CD14-positive monocyte (primary cell): ENCODE measurements at regions of chr22 and their contacts with region 1.

Region 1: DNA sequence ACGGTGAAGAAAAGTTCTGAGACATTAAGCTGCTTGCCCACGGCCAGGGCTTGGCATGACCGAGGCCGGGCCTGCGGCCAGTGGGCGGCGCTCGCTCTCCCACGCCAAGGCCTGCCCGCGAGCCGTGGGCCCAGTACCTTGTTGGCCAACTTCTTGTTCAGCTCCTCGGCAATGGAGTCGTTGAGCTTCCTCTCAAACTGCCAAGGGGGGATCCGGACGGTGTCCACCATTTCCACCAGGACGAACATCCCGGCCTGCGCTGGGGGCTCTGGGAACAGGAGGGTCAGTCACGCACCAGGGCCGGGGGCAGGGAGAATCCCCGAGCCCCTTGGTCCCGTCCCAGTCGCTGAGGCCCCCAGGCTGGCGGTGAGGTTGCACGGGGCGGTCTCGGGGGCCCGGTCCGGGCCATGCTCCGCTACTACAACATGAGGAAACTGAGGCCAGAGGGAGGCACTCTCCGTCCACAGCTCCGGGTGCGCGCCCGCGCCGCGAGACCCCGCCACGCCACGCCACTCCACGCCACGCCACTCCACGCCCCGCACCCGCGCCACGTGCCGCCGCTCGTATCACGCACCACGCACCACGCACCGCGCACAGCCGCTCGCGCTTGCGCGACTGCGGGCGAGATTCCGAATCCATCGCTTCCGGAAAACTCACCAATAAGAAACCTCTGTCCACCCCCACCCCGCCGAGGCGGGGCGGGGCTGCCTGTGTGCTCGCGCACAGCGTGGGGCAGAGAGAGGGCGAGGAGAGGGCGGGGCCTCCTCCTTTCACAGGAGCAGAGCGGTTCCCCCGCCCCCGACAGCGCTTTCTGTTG is at the start of gene POLR3H:
- DNase-seq: peak; percentile 96 to 99 (median 98)
- H3K4me3 ChIP-seq: peak within 1 kb of the TSS; percentile 56 to 93 (median 82)
- H3K4me3 Mint-ChIP-seq: peak within 1 kb of the TSS; percentile 87 to 94
- H3K27ac ChIP-seq: peak within 1 kb of the TSS; percentile 87 to 93
- H3K27ac Mint-ChIP-seq: peak within 1 kb of the TSS; percentile 83 to 95 (median 93)
- H3K4me1 ChIP-seq: peaks cover 17 to 24% of the 10 kb centered on the region in 2 donors
- H3K4me1 Mint-ChIP-seq: peaks cover 29% of the 10 kb centered on the region
- H3K27me3 ChIP-seq: no peaks in the 10 kb centered on the region
- H3K27me3 Mint-ChIP-seq: peaks cover 0 to 4% (median 2%) of the 10 kb centered on the region in 3 donors
- CTCF ChIP-seq: peak; percentile 79
- polyA plus RNA-seq, gene POLR3H: 9.4 to 19.0 (median 10.4) TPM

Region 2: GRCh38 chr22:41526837-41527799 is 16.9 kb before region 1 on chr22:
- intact Hi-C with region 1: no loop called
- DNase-seq: peak; percentile 20 to 36 (median 20)
- H3K4me3 ChIP-seq: no peak overlapping the region
- H3K4me3 Mint-ChIP-seq: no peak overlapping the region
- H3K27ac ChIP-seq: peak overlapping the region; percentile 16 to 61
- H3K27ac Mint-ChIP-seq: peak overlapping the region in 3 of 7 donors; percentile 64 to 77 (median 70)
- H3K4me1 ChIP-seq: peaks cover 0 to 9% of the 10 kb centered on the region in 2 donors
- H3K4me1 Mint-ChIP-seq: peaks cover 8% of the 10 kb centered on the region
- H3K27me3 ChIP-seq: no peaks in the 10 kb centered on the region
- H3K27me3 Mint-ChIP-seq: peaks cover 0 to 6% (median 0%) of the 10 kb centered on the region in 3 donors
- CTCF ChIP-seq: peak; percentile 98

Region 3: DNA sequence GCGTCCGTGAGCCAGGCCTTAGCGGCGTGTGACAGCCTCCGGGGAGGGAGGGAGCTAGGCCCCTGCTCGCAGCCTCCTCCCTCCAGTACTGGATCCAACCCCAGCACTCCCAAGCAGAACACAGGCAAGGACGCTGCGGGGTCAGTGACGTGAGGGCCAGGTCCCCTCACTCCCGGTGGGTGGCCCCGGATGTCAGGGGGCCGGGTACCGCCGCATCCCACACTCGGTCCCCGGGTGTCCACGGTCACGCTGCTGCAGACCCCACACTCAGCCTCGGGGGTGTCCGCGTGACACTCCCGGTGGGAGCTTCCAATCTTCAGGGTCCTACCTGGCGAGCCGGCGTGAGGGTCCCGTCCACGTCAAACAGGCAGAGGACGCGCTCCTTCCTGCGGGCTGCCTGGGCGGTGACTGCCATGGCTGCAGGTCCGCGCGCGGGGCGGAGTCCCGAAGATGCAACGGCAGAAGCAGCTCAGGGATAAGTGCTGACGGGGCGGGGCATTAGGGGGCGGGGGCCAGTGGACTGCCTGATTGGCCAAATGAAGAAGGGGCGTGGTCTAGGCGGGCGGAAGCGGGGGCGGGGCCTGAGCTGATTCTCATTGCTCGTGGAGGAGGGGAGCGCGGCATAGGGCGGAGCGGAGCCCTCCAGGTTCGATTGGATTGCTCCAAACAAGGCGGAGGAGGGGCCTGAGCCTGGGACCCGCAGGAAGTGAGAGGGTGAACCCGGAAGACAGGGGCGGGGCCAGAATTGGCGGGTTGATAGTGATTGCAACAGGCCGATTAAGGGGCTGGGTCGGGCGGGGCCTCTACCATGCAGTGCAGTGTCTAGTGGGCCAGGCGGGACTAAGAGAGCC is 45.6 kb after region 1 on chr22 and contains the start of gene PMM1:
- intact Hi-C with region 1: loop called in 1 of 2 experiments (anchors 5 kb)
- DNase-seq: peak; percentile 100
- H3K4me3 ChIP-seq: peak within 1 kb of the TSS; percentile 69 to 94 (median 71)
- H3K4me3 Mint-ChIP-seq: peak within 1 kb of the TSS; percentile 88 to 93
- H3K27ac ChIP-seq: peak within 1 kb of the TSS in 1 of 2 donors; percentile 82
- H3K27ac Mint-ChIP-seq: peak within 1 kb of the TSS; percentile 60 to 90 (median 80)
- H3K4me1 ChIP-seq: peaks cover 17 to 19% of the 10 kb centered on the region in 2 donors
- H3K4me1 Mint-ChIP-seq: peaks cover 12% of the 10 kb centered on the region
- H3K27me3 ChIP-seq: no peaks in the 10 kb centered on the region
- H3K27me3 Mint-ChIP-seq: peaks cover 1 to 4% (median 2%) of the 10 kb centered on the region in 3 donors
- CTCF ChIP-seq: no peak
- polyA plus RNA-seq, gene PMM1: 15.6 to 32.4 (median 23.5) TPM

Region 4: GRCh38 chr22:41596776-41597634 is 52.9 kb after region 1 on chr22:
- intact Hi-C with region 1: loop called (anchors 5 kb)
- DNase-seq: peak; percentile 24 to 48 (median 40)
- H3K4me3 ChIP-seq: no peak overlapping the region
- H3K4me3 Mint-ChIP-seq: no peak overlapping the region
- H3K27ac ChIP-seq: no peak overlapping the region
- H3K27ac Mint-ChIP-seq: peak overlapping the region in 4 of 7 donors; percentile 31 to 68 (median 50)
- H3K4me1 ChIP-seq: no peaks in the 10 kb centered on the region
- H3K4me1 Mint-ChIP-seq: no peaks in the 10 kb centered on the region
- H3K27me3 ChIP-seq: no peaks in the 10 kb centered on the region
- H3K27me3 Mint-ChIP-seq: peaks cover 5 to 9% (median 5%) of the 10 kb centered on the region in 3 donors
- CTCF ChIP-seq: peak; percentile 80

Region 5: DNA sequence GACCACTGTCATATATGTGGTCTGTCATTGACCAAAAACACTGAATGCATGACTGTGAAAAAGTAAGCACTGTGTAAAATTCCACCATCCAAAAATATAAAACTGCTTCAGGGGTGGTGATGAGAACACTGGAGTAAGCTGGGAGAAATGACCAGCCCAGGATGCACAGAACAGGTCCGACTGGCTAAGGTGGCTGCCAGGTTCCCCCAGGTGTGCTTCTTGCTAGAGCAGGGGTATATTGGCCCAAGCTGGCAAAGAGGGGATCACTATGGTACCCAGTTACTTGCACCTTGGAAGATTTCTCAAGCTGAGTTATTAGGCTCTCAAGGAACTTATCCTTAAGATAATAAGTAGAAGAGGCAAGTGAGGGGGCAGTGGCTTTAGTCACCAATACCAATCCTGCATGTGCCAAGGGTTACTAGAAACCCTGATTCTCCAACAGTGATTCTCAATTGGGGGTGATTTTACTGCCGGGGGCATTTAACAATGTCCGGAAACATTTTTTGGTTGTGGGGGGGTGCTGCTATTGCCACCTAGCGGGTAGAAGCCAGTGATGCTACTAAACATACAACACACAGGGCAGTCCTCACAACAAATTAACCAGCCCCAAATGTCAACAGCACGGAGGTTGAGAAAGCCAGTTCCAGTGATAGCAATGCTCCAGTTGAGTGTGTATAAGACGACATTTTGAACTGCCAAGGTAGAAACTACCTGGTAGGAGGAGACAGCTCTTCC is 128.9 kb after region 1 on chr22:
- intact Hi-C with region 1: no loop called
- DNase-seq: no peak
- H3K4me3 ChIP-seq: no peak overlapping the region
- H3K4me3 Mint-ChIP-seq: no peak overlapping the region
- H3K27ac ChIP-seq: no peak overlapping the region
- H3K27ac Mint-ChIP-seq: peak overlapping the region in 2 of 7 donors; percentile 30 to 50
- H3K4me1 ChIP-seq: no peaks in the 10 kb centered on the region
- H3K4me1 Mint-ChIP-seq: no peaks in the 10 kb centered on the region
- H3K27me3 ChIP-seq: no peaks in the 10 kb centered on the region
- H3K27me3 Mint-ChIP-seq: no peaks in the 10 kb centered on the region
- CTCF ChIP-seq: no peak

Region 6: GRCh38 chr22:42794551-42795510 is 1250.8 kb after region 1 on chr22:
- intact Hi-C with region 1: no loop called
- DNase-seq: no peak
- H3K4me3 ChIP-seq: no peak overlapping the region
- H3K4me3 Mint-ChIP-seq: no peak overlapping the region
- H3K27ac ChIP-seq: no peak overlapping the region
- H3K27ac Mint-ChIP-seq: peak overlapping the region in 3 of 7 donors; percentile 4 to 62 (median 31)
- H3K4me1 ChIP-seq: peaks cover 0 to 20% of the 10 kb centered on the region in 2 donors
- H3K4me1 Mint-ChIP-seq: peaks cover 10% of the 10 kb centered on the region
- H3K27me3 ChIP-seq: no peaks in the 10 kb centered on the region
- H3K27me3 Mint-ChIP-seq: no peaks in the 10 kb centered on the region
- CTCF ChIP-seq: no peak